Activated T-helper 1 cell treated with anti-CD3 and anti-CD28 coated beads, Interleukin-12 subunit alpha, Interleukin-12 subunit beta, Interleukin-2, Interleukin-4 antibody, amounts not matched to agents 30 ng/mL and 10 ng/mL and 1 ng/mL, durations not matched to agents 14 hours and 24 hours and 36 hours (primary cell): ENCODE measurements at regions of chr21 and their contacts with region 1.

Region 1: DNA sequence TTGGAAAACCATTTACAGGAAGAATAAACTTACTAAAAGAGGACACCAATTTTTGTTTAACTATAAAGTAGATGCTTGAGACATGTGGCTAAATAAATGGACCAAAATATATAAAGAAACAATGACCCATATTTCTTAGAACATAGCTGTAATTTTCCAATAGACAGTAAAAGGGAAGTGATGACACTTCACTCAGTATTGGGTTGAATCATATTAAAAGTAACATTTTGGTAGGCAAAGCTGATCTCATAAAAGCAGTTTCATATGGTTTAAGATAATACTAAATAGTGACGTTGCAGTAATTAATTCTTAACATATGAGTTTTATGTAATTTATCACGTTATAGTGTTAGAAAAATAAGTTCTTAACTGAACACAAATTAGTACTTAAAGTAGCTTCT is 308.9 kb upstream of the RUNX1 start:
- DNase-seq: no peak
- H3K4me3 Mint-ChIP-seq: no peak overlapping the region
- H3K27ac Mint-ChIP-seq: peak overlapping the region; percentile 56
- H3K4me1 Mint-ChIP-seq: peaks cover 7% of the 10 kb centered on the region
- H3K27me3 Mint-ChIP-seq: no peaks in the 10 kb centered on the region

Region 2: DNA sequence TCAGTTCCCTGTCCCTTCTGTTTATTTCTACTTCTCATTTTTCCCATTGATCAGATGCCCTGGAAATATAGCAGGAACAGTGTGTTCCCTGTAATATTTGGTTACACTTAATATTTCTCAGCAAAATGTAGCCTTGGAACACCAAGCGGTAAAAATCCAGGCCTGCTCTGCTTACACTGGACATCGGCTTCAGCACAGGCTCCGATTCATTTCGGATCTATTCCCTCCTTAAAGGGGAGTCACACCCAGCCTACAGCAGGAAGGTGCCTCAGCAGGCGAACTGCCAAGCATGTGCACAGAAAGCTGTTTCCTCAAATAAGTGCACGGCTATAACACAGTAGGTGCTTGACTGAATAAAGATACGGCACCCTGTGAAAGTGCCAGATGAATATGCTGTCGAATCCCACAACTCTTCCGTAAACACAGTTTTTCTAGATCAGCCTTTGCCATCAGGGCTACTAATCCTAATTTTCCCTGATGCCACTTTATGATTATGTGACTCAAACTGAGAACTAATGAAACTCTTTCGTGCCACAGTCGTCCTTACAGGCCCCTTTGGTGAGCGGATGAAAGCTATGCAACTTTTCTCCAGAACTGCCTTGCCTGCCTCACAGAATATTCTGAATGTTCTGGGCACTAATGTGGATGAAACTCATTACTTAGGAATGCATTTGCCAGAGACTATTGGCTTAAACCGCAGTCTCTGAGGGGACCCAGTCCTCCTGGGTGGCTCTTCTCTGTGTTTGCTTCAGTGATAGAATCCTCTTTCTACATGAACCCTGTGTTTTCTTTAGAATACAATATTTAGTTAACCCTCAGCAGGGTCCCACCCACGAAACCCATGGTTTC is 33.4 kb before region 1 on chr21:
- intact Hi-C with region 1: no loop called
- DNase-seq: no peak
- H3K4me3 Mint-ChIP-seq: no peak overlapping the region
- H3K27ac Mint-ChIP-seq: no peak overlapping the region
- H3K4me1 Mint-ChIP-seq: peaks cover 10% of the 10 kb centered on the region
- H3K27me3 Mint-ChIP-seq: no peaks in the 10 kb centered on the region

Region 3: GRCh38 chr21:35390013-35390776 is 32.2 kb after region 1 on chr21:
- intact Hi-C with region 1: loop called (anchors 5 kb)
- DNase-seq: no peak
- H3K4me3 Mint-ChIP-seq: no peak overlapping the region
- H3K27ac Mint-ChIP-seq: no peak overlapping the region
- H3K4me1 Mint-ChIP-seq: peaks cover 24% of the 10 kb centered on the region
- H3K27me3 Mint-ChIP-seq: no peaks in the 10 kb centered on the region

Region 4: GRCh38 chr21:35438643-35439404 is 80.8 kb after region 1 on chr21:
- intact Hi-C with region 1: no loop called
- DNase-seq: no peak
- H3K4me3 Mint-ChIP-seq: no peak overlapping the region
- H3K27ac Mint-ChIP-seq: no peak overlapping the region
- H3K4me1 Mint-ChIP-seq: peaks cover 14% of the 10 kb centered on the region
- H3K27me3 Mint-ChIP-seq: peaks cover 9% of the 10 kb centered on the region